A673 (cell line): ENCODE measurements at regions of chr12 and their contacts with region 1.

Region 1: GRCh38 chr12:25924491-25925463 is 33.7 kb upstream of the RASSF8 start:
- DNase-seq: peak; percentile 50
- H3K4me3 ChIP-seq: no peak overlapping the region
- H3K27ac ChIP-seq: no peak overlapping the region
- H3K4me1 ChIP-seq: peaks cover 11% of the 10 kb centered on the region
- H3K27me3 ChIP-seq: no peaks in the 10 kb centered on the region
- CTCF ChIP-seq: no peak

Region 2: GRCh38 chr12:25811656-25812126 is 113.1 kb before region 1 on chr12:
- CTCF ChIA-PET with region 1: no interaction called
- POLR2A ChIA-PET with region 1: no interaction called
- intact Hi-C with region 1: loop called (anchors 5 kb)
- DNase-seq: peak; percentile 79
- H3K4me3 ChIP-seq: no peak overlapping the region
- H3K27ac ChIP-seq: no peak overlapping the region
- H3K4me1 ChIP-seq: peaks cover 8% of the 10 kb centered on the region
- H3K27me3 ChIP-seq: no peaks in the 10 kb centered on the region
- CTCF ChIP-seq: no peak

Region 3: DNA sequence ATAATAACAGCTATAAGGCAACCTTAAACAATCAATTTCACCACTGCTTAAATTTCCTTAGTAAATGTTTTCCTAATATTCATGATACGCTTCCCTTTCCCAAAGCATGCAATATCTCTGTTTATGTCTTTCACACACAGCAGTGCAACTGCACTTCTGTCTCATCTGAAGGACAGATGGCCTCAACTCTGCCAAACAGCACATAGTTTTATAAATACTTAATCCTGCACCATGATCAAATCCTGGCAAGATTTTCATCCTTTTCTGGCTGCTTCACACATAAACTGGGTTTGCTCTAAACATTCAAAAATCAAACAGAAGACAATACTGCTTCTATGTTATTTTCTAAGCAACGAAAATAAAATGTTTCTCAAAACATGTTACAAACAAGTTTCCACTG is 641.9 kb after region 1 on chr12:
- CTCF ChIA-PET with region 1: no interaction called
- POLR2A ChIA-PET with region 1: no interaction called
- intact Hi-C with region 1: no loop called
- DNase-seq: no peak
- H3K4me3 ChIP-seq: no peak overlapping the region
- H3K27ac ChIP-seq: no peak overlapping the region
- H3K4me1 ChIP-seq: no peaks in the 10 kb centered on the region
- H3K27me3 ChIP-seq: no peaks in the 10 kb centered on the region
- CTCF ChIP-seq: no peak

Region 4: DNA sequence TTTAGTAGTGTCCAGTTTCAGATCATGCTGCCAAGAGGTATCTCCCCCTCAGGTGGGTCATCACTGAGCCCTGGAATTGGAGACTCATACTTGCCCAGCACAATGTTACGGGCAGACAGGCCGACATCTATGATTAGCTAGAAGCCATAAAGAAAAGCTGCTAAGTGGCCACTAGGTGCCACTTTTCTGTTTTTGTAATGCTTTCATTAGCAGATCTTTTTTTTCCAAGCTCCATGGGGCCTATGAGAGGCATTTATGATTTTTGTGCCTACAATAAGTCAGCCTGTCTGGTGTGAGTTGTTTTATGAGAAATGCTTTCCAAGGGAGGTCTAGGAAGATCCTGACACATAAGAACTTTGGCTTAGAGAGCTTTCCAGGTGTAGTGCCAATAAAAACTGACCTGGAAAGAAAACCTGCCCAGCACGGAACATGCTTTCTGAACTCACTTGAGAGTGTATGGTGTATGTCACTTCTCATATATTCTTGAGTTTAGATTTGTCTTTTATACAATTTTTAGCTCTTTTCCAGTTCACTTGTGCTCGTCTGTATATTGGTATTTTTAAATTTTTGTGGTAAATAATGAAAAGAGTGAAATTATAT is 1500.0 kb after region 1 on chr12:
- CTCF ChIA-PET with region 1: no interaction called
- POLR2A ChIA-PET with region 1: no interaction called
- intact Hi-C with region 1: no loop called
- DNase-seq: peak; percentile 61
- H3K4me3 ChIP-seq: no peak overlapping the region
- H3K27ac ChIP-seq: no peak overlapping the region
- H3K4me1 ChIP-seq: no peaks in the 10 kb centered on the region
- H3K27me3 ChIP-seq: no peaks in the 10 kb centered on the region
- CTCF ChIP-seq: peak; percentile 63